T-cell (primary cell): ENCODE measurements at regions of chr11 and their contacts with region 1.

Region 1: GRCh38 chr11:34174412-34175041 is 69.1 kb downstream of the NAT10 start:
- DNase-seq: peak; percentile 38 to 85 (median 73)
- ATAC-seq: peak; percentile 96 to 100 (median 98)
- H3K4me3 ChIP-seq: peak overlapping the region in 1 of 2 donors; percentile 41
- H3K4me3 Mint-ChIP-seq: peak overlapping the region; percentile 9 to 62 (median 37)
- H3K27ac ChIP-seq: no peak overlapping the region
- H3K27ac Mint-ChIP-seq: no peak overlapping the region
- H3K4me1 ChIP-seq: peaks cover 0 to 13% of the 10 kb centered on the region in 2 experiments
- H3K4me1 Mint-ChIP-seq: peaks cover 3 to 7% (median 5%) of the 10 kb centered on the region in 3 donors
- H3K27me3 ChIP-seq: peaks cover 0 to 35% of the 10 kb centered on the region in 2 experiments
- H3K27me3 Mint-ChIP-seq: no peaks in the 10 kb centered on the region

Region 2: GRCh38 chr11:33912405-33913361 is 261.8 kb before region 1 on chr11:
- CTCF ChIA-PET with region 1: interaction called in 1 of 2 experiments, 10 read pairs
- POLR2A ChIA-PET with region 1: no interaction called
- DNase-seq: no peak
- ATAC-seq: no peak
- H3K4me3 ChIP-seq: no peak overlapping the region
- H3K4me3 Mint-ChIP-seq: no peak overlapping the region
- H3K27ac ChIP-seq: no peak overlapping the region
- H3K27ac Mint-ChIP-seq: no peak overlapping the region
- H3K4me1 ChIP-seq: peaks cover 0 to under 1% of the 10 kb centered on the region in 2 experiments
- H3K4me1 Mint-ChIP-seq: peaks cover 0 to 4% (median 2%) of the 10 kb centered on the region in 3 donors
- H3K27me3 ChIP-seq: peaks cover 0 to 10% of the 10 kb centered on the region in 2 experiments
- H3K27me3 Mint-ChIP-seq: peaks cover 16 to 45% of the 10 kb centered on the region in 2 donors

Region 3: DNA sequence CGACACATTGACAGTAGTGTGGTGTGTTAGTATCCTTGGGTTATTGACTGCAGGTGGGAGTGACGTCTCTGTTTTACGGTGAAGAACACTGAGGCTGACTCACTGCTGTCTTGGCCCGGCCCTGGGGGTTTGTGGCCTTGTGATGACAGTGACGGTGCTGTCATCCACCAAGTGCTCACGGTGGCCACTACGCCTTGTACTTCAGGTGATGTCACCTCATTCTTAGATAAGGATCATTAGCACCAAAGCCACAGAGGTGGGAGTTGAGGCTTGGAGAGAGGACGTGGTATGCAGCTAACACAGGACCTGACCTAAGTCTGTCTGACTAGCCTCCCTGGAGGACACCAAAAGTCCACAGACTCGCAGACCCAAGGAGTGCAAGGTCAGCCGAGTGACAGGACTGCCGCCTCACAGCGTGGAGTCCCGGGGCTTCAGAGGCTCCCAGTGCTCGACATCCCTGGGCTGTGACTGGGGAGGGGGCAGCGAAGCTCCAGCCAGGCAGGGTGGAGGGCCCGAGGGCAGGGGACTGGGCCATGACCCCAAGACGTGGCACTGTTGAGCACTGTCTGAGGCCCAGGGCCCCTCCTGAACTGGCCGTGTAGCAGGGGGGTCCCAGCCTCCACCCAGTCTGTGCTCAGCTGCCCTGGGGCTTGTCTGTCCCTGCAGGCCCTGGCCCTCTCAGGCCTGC is 12.6 kb before region 1 on chr11:
- CTCF ChIA-PET with region 1: interaction called in 1 of 2 experiments, 10 read pairs
- POLR2A ChIA-PET with region 1: no interaction called
- DNase-seq: peak in 8 of 35 experiments; percentile 4 to 32 (median 12)
- ATAC-seq: peak in 3 of 4 experiments; percentile 39 to 49 (median 41)
- H3K4me3 ChIP-seq: no peak overlapping the region
- H3K4me3 Mint-ChIP-seq: no peak overlapping the region
- H3K27ac ChIP-seq: no peak overlapping the region
- H3K27ac Mint-ChIP-seq: no peak overlapping the region
- H3K4me1 ChIP-seq: peaks cover 0 to 7% of the 10 kb centered on the region in 2 experiments
- H3K4me1 Mint-ChIP-seq: peaks cover 0 to 20% (median 11%) of the 10 kb centered on the region in 3 donors
- H3K27me3 ChIP-seq: peaks cover 0 to 15% of the 10 kb centered on the region in 2 experiments
- H3K27me3 Mint-ChIP-seq: no peaks in the 10 kb centered on the region

Region 4: DNA sequence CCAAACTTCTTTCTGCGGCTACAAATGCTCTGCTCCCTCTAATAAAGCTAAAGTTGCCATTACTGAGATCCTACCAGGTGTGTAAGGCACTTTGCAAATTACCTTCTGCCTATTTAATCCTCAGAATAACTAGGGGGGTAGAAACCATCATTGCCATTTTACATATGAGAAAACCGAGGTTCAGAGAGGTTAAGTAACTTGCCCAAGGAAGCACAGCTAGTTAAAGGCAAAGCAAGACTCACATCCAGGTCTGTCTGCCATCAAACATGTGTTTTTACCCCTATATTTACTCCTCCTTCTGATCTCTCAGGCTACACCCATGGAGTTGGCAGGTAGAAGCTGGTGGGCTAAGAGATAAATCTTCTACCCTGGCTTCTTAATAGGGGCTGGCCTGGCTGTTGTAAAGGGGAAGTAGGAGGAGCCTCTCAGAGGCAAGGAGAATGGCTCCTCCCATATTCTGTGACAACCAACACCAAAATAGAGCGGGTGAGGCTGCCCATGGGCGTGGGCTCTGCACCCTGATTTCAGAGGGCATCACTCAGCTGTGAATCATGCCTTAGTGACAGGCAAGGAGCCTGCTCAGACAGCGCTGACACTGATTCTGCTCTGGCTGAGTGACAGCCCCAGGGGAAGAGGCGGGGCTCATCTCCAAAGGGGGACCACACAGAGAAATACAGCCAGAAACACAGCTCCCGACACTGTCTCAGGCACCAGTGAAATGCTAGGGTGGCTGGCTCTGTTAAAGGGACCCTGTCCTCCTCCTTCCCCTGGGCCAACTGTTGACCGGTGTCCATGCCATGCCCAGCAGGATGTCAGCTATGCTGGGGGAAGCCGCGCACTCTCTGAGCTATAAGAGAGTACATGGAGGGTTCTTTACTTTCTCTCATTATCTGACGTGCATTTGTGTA is 76.5 kb after region 1 on chr11:
- CTCF ChIA-PET with region 1: interaction called, 6 read pairs
- POLR2A ChIA-PET with region 1: interaction called, 6 to 10 read pairs
- DNase-seq: peak; percentile 29 to 80 (median 62)
- ATAC-seq: peak; percentile 89 to 98 (median 95)
- H3K4me3 ChIP-seq: peak overlapping the region; percentile 26 to 49
- H3K4me3 Mint-ChIP-seq: peak overlapping the region; percentile 15 to 78 (median 53)
- H3K27ac ChIP-seq: no peak overlapping the region
- H3K27ac Mint-ChIP-seq: peak overlapping the region in 1 of 2 donors; percentile 44
- H3K4me1 ChIP-seq: peaks cover 40 to 56% of the 10 kb centered on the region in 2 experiments
- H3K4me1 Mint-ChIP-seq: peaks cover 52 to 62% (median 62%) of the 10 kb centered on the region in 3 donors
- H3K27me3 ChIP-seq: peaks cover 0 to 19% of the 10 kb centered on the region in 2 experiments
- H3K27me3 Mint-ChIP-seq: peaks cover 0 to 6% of the 10 kb centered on the region in 2 donors

Region 5: GRCh38 chr11:34348919-34349318 is 174.4 kb after region 1 on chr11:
- CTCF ChIA-PET with region 1: interaction called, 3 to 10 read pairs
- POLR2A ChIA-PET with region 1: no interaction called
- DNase-seq: no peak
- ATAC-seq: no peak
- H3K4me3 ChIP-seq: no peak overlapping the region
- H3K4me3 Mint-ChIP-seq: no peak overlapping the region
- H3K27ac ChIP-seq: no peak overlapping the region
- H3K27ac Mint-ChIP-seq: no peak overlapping the region
- H3K4me1 ChIP-seq: no peaks in the 10 kb centered on the region
- H3K4me1 Mint-ChIP-seq: no peaks in the 10 kb centered on the region
- H3K27me3 ChIP-seq: peaks cover 0 to 5% of the 10 kb centered on the region in 2 experiments
- H3K27me3 Mint-ChIP-seq: peaks cover 15 to 26% of the 10 kb centered on the region in 2 donors

Region 6: GRCh38 chr11:34357701-34358257 is 183.3 kb after region 1 on chr11 and contains the start of gene ABTB2:
- CTCF ChIA-PET with region 1: interaction called, 6 to 27 read pairs
- POLR2A ChIA-PET with region 1: no interaction called
- DNase-seq: peak; percentile 90 to 98 (median 97)
- ATAC-seq: peak; percentile 89 to 93 (median 90)
- H3K4me3 ChIP-seq: peak within 1 kb of the TSS; percentile 74
- H3K4me3 Mint-ChIP-seq: peak within 1 kb of the TSS; percentile 76 to 83 (median 79)
- H3K27ac ChIP-seq: peak within 1 kb of the TSS; percentile 58
- H3K27ac Mint-ChIP-seq: peak within 1 kb of the TSS; percentile 56 to 79
- H3K4me1 ChIP-seq: peaks cover 0 to 29% of the 10 kb centered on the region in 2 experiments
- H3K4me1 Mint-ChIP-seq: peaks cover 21 to 29% (median 25%) of the 10 kb centered on the region in 3 donors
- H3K27me3 ChIP-seq: peaks cover 5 to 34% of the 10 kb centered on the region in 2 experiments
- H3K27me3 Mint-ChIP-seq: peaks cover 39 to 53% of the 10 kb centered on the region in 2 donors
- total RNA-seq, gene ABTB2: 0.50 to 0.93 (median 0.82) TPM

Region 7: GRCh38 chr11:34363363-34364084 is 189.0 kb after region 1 on chr11:
- CTCF ChIA-PET with region 1: interaction called, 4 to 27 read pairs
- POLR2A ChIA-PET with region 1: no interaction called
- DNase-seq: no peak
- ATAC-seq: no peak
- H3K4me3 ChIP-seq: no peak overlapping the region
- H3K4me3 Mint-ChIP-seq: no peak overlapping the region
- H3K27ac ChIP-seq: no peak overlapping the region
- H3K27ac Mint-ChIP-seq: no peak overlapping the region
- H3K4me1 ChIP-seq: peaks cover 6 to 10% of the 10 kb centered on the region in 2 experiments
- H3K4me1 Mint-ChIP-seq: peaks cover 9 to 16% (median 11%) of the 10 kb centered on the region in 3 donors
- H3K27me3 ChIP-seq: peaks cover 0 to 13% of the 10 kb centered on the region in 2 experiments
- H3K27me3 Mint-ChIP-seq: peaks cover 23 to 25% of the 10 kb centered on the region in 2 donors